ENCODE measurements at regions of chr13 and their contacts with region 1.

Region 1: GRCh38 chr13:99200432-99201167 is at the start of gene UBAC2:
- DNase-seq: peak; percentile 90 to 100 (median 97)
- ATAC-seq: peak; percentile 79
- H3K4me3 ChIP-seq: peak within 1 kb of the TSS; percentile 99
- H3K4me3 Mint-ChIP-seq: peak within 1 kb of the TSS; percentile 95
- H3K27ac ChIP-seq: peak within 1 kb of the TSS; percentile 97 to 99
- H3K27ac Mint-ChIP-seq: peak within 1 kb of the TSS; percentile 93
- H3K4me1 ChIP-seq: peaks cover 36% of the 10 kb centered on the region
- H3K4me1 Mint-ChIP-seq: peaks cover 67% of the 10 kb centered on the region
- H3K27me3 ChIP-seq: no peaks in the 10 kb centered on the region
- H3K27me3 Mint-ChIP-seq: no peaks in the 10 kb centered on the region
- CTCF ChIP-seq: no peak
- total RNA-seq, gene UBAC2: 59.8 to 67.4 TPM

Region 2: DNA sequence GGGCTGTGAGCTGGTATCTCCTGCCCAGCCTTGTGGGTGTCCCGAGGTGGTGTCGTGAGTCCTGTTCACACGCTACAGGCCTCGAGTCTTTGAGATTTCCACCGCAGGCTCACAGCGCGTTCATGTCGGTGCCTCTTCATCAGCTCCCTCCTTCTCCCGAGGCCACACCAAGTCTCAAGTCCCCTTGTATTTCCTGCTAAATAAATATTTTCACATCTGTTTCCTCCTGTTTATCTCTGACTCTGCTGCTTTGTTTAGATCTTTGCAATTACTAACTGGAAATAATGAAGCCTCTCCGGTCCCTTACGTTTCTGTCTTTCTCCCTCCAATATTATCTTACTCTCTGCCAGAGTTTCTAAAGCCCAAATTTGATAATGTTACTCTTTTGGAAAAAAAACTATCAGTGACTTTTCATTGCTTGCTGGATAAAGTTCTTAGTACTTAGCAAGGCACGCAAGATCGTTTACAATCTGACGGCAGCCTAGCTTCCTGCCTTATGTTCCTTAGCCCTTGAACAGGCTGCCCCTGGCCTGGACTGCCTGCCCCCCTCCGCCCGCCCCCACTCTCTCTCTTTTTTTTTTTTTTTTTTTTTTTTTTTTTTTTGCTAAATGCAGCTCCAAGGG is 893.0 kb before region 1 on chr13:
- CTCF ChIA-PET with region 1: no interaction called
- POLR2A ChIA-PET with region 1: no interaction called
- intact Hi-C with region 1: no loop called
- DNase-seq: no peak
- ATAC-seq: no peak
- H3K4me3 ChIP-seq: no peak overlapping the region
- H3K4me3 Mint-ChIP-seq: no peak overlapping the region
- H3K27ac ChIP-seq: no peak overlapping the region
- H3K27ac Mint-ChIP-seq: no peak overlapping the region
- H3K4me1 ChIP-seq: no peaks in the 10 kb centered on the region
- H3K4me1 Mint-ChIP-seq: no peaks in the 10 kb centered on the region
- H3K27me3 ChIP-seq: no peaks in the 10 kb centered on the region
- H3K27me3 Mint-ChIP-seq: peaks cover 7% of the 10 kb centered on the region
- CTCF ChIP-seq: no peak

Region 3: GRCh38 chr13:98771838-98772611 is 428.6 kb before region 1 on chr13:
- CTCF ChIA-PET with region 1: no interaction called
- POLR2A ChIA-PET with region 1: no interaction called
- intact Hi-C with region 1: no loop called
- DNase-seq: no peak
- ATAC-seq: no peak
- H3K4me3 ChIP-seq: no peak overlapping the region
- H3K4me3 Mint-ChIP-seq: no peak overlapping the region
- H3K27ac ChIP-seq: no peak overlapping the region
- H3K27ac Mint-ChIP-seq: no peak overlapping the region
- H3K4me1 ChIP-seq: no peaks in the 10 kb centered on the region
- H3K4me1 Mint-ChIP-seq: no peaks in the 10 kb centered on the region
- H3K27me3 ChIP-seq: peaks cover 0 to 2% of the 10 kb centered on the region in 2 experiments
- H3K27me3 Mint-ChIP-seq: peaks cover 14% of the 10 kb centered on the region
- CTCF ChIP-seq: no peak

Region 4: GRCh38 chr13:99176309-99177276 is 24.0 kb before region 1 on chr13:
- CTCF ChIA-PET with region 1: interaction called, 48 read pairs
- POLR2A ChIA-PET with region 1: interaction called, 6 read pairs
- intact Hi-C with region 1: loop called (anchors 2 kb)
- DNase-seq: peak; percentile 64 to 89 (median 74)
- ATAC-seq: peak; percentile 93
- H3K4me3 ChIP-seq: peak overlapping the region; percentile 16
- H3K4me3 Mint-ChIP-seq: peak overlapping the region; percentile 42
- H3K27ac ChIP-seq: no peak overlapping the region
- H3K27ac Mint-ChIP-seq: peak overlapping the region; percentile 76
- H3K4me1 ChIP-seq: peaks cover 41% of the 10 kb centered on the region
- H3K4me1 Mint-ChIP-seq: peaks cover 40% of the 10 kb centered on the region
- H3K27me3 ChIP-seq: no peaks in the 10 kb centered on the region
- H3K27me3 Mint-ChIP-seq: no peaks in the 10 kb centered on the region
- CTCF ChIP-seq: peak; percentile 94

Region 5: GRCh38 chr13:99220199-99220935 is 19.8 kb after region 1 on chr13:
- CTCF ChIA-PET with region 1: interaction called, 15 read pairs
- POLR2A ChIA-PET with region 1: interaction called, 259 read pairs
- intact Hi-C with region 1: loop called (anchors 1 to 2 kb)
- DNase-seq: peak in 7 of 14 experiments; percentile 24 to 82 (median 55)
- ATAC-seq: peak; percentile 37
- H3K4me3 ChIP-seq: peak overlapping the region; percentile 8
- H3K4me3 Mint-ChIP-seq: peak overlapping the region; percentile 63
- H3K27ac ChIP-seq: peak overlapping the region; percentile 0 to 65
- H3K27ac Mint-ChIP-seq: peak overlapping the region; percentile 100
- H3K4me1 ChIP-seq: peaks cover 63% of the 10 kb centered on the region
- H3K4me1 Mint-ChIP-seq: peaks cover 94% of the 10 kb centered on the region
- H3K27me3 ChIP-seq: no peaks in the 10 kb centered on the region
- H3K27me3 Mint-ChIP-seq: no peaks in the 10 kb centered on the region
- CTCF ChIP-seq: no peak

Region 6: DNA sequence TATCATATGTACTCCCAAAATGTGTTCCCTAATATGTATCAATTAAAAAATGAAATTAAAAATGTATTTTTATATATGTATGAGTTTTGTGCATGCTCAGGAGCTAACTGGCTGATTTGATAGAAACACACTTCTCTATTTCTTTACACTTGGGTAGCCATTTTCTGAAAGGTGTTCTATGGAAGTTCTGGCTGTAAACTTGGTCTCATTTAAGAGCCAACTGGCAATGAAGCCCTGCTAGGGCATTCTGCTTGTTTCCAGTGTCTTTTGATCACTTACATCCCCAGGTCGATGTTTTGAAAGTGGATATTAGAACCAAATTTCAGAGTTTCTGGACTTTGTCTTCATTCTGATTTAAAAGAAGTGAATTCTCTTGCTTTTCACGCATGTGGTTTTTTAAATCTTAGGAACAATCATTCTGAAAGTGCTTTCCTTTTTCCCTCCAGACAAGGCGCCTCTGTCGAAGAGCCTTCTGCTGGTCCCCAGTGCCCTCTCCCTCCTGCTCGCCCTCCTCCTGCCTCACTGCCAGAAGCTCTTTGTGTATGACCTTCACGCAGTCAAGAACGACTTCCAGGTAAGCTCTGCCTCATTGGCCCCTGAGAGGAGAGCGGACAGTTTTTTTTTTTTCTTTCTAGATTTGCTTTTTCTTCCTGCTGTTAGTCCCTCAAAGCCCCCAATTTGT is 37.5 kb after region 1 on chr13:
- CTCF ChIA-PET with region 1: interaction called, 4 read pairs
- POLR2A ChIA-PET with region 1: interaction called, 18 read pairs
- intact Hi-C with region 1: loop called in 1 of 2 experiments (anchors 2 kb)
- DNase-seq: peak in 5 of 14 experiments; percentile 26 to 73 (median 62)
- ATAC-seq: peak; percentile 77
- H3K4me3 ChIP-seq: peak overlapping the region; percentile 45
- H3K4me3 Mint-ChIP-seq: peak overlapping the region; percentile 83
- H3K27ac ChIP-seq: peak overlapping the region; percentile 72 to 73
- H3K27ac Mint-ChIP-seq: peak overlapping the region; percentile 94
- H3K4me1 ChIP-seq: peaks cover 32% of the 10 kb centered on the region
- H3K4me1 Mint-ChIP-seq: peaks cover 72% of the 10 kb centered on the region
- H3K27me3 ChIP-seq: no peaks in the 10 kb centered on the region
- H3K27me3 Mint-ChIP-seq: no peaks in the 10 kb centered on the region
- CTCF ChIP-seq: no peak

Region 7: DNA sequence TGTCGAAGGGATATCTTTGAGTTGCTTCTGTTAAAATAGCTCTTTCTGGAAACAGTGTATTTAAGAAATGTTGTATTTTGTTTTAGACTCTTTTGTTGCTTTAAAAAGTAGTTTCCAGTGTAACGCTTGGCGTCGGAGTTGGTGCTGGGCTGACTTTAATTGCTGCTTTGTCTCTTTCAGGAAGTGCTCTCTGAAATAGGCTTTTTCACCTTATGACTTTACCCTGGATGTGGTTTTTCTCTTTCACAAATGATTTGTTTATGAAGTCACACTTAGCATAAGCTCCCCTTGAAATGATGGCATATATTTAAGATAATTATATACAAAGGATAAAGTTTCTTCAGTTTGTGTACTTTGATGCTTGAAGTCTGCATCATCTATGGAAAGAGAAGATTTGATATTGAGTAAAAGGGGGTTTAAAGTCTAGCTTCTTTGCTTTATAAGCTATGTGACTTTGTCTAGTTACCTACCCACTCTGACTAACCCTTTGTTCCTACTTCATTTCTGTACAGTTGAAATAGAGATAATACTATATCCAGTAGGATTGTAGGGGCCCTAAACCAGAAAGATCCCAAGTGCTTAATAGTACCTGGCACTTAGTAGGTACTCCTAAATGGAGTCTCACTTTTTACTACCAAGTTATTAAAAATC is 57.7 kb after region 1 on chr13 and contains the start of gene GPR18:
- CTCF ChIA-PET with region 1: interaction called, 21 read pairs
- POLR2A ChIA-PET with region 1: interaction called, 186 read pairs
- intact Hi-C with region 1: loop called in 1 of 2 experiments (anchors 1 kb)
- DNase-seq: peak in 6 of 14 experiments; percentile 27 to 88 (median 66)
- ATAC-seq: peak; percentile 75
- H3K4me3 ChIP-seq: peak within 1 kb of the TSS; percentile 69
- H3K4me3 Mint-ChIP-seq: peak within 1 kb of the TSS; percentile 94
- H3K27ac ChIP-seq: peak within 1 kb of the TSS; percentile 70 to 78
- H3K27ac Mint-ChIP-seq: peak within 1 kb of the TSS; percentile 92
- H3K4me1 ChIP-seq: peaks cover 22% of the 10 kb centered on the region
- H3K4me1 Mint-ChIP-seq: peaks cover 83% of the 10 kb centered on the region
- H3K27me3 ChIP-seq: no peaks in the 10 kb centered on the region
- H3K27me3 Mint-ChIP-seq: no peaks in the 10 kb centered on the region
- CTCF ChIP-seq: no peak
- total RNA-seq, gene GPR18: 42.9 to 45.1 TPM